ENCODE measurements at regions of chr20 and their contacts with region 1.

Region 1: DNA sequence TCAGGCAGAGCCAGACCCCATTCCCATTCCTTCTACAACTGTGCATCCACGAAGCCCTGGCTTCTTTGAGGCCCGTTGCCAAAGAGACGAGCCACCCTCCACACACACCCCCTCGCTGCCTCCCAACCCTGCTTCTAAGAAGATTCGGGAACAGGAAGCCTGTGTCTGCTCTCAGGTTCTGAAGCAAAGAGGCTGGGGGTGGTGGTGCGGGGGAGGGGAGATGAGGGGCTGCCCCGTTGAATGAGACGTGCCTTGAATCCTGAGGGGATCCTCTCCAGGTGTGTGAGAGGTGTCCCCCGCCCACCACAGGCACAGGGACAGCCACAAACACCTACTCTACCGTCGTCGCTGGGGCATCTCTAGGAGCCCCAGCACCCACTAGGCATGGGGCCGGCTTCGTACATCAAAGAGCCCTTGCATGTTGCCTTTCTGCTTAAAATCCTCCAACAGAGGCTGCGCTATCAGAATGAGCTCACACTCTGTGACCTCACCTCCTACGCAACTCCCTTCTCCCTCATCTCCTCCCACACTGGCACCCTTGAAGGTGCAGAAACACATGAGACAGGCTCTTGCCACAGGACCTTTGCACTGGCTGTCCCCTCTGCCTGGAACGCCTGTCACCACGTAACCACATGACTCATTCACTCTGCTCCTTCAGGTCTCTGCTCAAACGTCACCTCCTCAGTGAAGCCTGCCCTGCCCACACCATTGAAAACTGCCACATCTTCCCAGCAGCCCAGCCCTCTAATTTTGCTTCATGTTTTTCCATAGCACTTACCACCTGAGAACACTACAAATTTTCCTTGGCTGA is 58.5 kb downstream of the PREX1 start:
- DNase-seq: peak; percentile 36 to 94 (median 85)
- ATAC-seq: peak; percentile 68 to 86 (median 70)
- H3K4me3 ChIP-seq: peak overlapping the region in 1 of 2 donors; percentile 10
- H3K4me3 Mint-ChIP-seq: peak overlapping the region; percentile 7 to 57 (median 54)
- H3K27ac ChIP-seq: peak overlapping the region; percentile 80
- H3K27ac Mint-ChIP-seq: peak overlapping the region; percentile 93 to 94
- H3K4me1 ChIP-seq: peaks cover 13 to 94% of the 10 kb centered on the region in 2 experiments
- H3K4me1 Mint-ChIP-seq: peaks cover 78 to 97% (median 89%) of the 10 kb centered on the region in 3 donors
- H3K27me3 ChIP-seq: no peaks in the 10 kb centered on the region
- H3K27me3 Mint-ChIP-seq: no peaks in the 10 kb centered on the region

Region 2: GRCh38 chr20:48733296-48733887 is 35.9 kb before region 1 on chr20:
- CTCF ChIA-PET with region 1: no interaction called
- POLR2A ChIA-PET with region 1: no interaction called
- DNase-seq: no peak
- ATAC-seq: no peak
- H3K4me3 ChIP-seq: no peak overlapping the region
- H3K4me3 Mint-ChIP-seq: no peak overlapping the region
- H3K27ac ChIP-seq: no peak overlapping the region
- H3K27ac Mint-ChIP-seq: peak overlapping the region; percentile 11 to 49
- H3K4me1 ChIP-seq: peaks cover 0 to 53% of the 10 kb centered on the region in 2 experiments
- H3K4me1 Mint-ChIP-seq: peaks cover 45 to 67% (median 59%) of the 10 kb centered on the region in 3 donors
- H3K27me3 ChIP-seq: no peaks in the 10 kb centered on the region
- H3K27me3 Mint-ChIP-seq: no peaks in the 10 kb centered on the region

Region 3: DNA sequence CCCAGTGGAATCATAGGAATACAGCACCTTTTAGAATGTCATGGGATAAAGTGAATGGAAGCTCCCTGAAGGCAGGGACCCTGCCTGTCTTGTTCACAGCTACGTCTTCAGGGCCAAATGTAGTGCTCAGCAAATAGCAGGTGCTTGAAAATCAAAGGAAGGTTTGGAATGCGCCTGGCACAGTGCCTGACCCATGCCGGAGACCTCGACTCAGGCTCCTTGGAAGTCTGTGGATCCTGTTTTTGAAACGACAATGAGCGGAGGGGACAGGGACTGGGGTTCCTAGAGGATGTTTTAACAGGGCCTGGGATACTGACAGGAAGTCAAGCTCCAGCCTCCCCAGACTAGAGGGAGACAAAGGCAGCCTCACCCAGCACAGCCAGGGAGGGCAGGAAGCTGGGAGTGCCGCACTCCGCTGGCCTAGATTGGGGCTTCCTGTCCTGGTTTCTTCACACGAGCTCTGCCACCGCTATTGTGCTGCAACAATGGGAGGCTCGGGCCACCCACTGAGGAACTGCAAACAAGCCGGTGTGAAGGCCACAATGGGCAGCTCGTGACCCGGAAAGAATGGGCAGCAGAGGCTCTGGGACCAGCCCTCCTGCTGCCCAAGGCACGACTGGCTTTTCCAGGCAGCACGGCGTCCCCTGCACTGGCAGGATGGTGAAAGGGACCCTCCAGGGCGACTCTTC is 18.2 kb before region 1 on chr20:
- CTCF ChIA-PET with region 1: interaction called in 1 of 2 experiments, 11 read pairs
- POLR2A ChIA-PET with region 1: interaction called, 3 read pairs
- DNase-seq: peak; percentile 25 to 71 (median 43)
- ATAC-seq: peak; percentile 89 to 93 (median 92)
- H3K4me3 ChIP-seq: peak overlapping the region in 1 of 2 donors; percentile 35
- H3K4me3 Mint-ChIP-seq: peak overlapping the region; percentile 64 to 73 (median 66)
- H3K27ac ChIP-seq: peak overlapping the region; percentile 34
- H3K27ac Mint-ChIP-seq: peak overlapping the region; percentile 90 to 97
- H3K4me1 ChIP-seq: peaks cover 15 to 77% of the 10 kb centered on the region in 2 experiments
- H3K4me1 Mint-ChIP-seq: peaks cover 60 to 87% (median 81%) of the 10 kb centered on the region in 3 donors
- H3K27me3 ChIP-seq: no peaks in the 10 kb centered on the region
- H3K27me3 Mint-ChIP-seq: no peaks in the 10 kb centered on the region

Region 4: GRCh38 chr20:49054056-49054643 is 284.9 kb after region 1 on chr20:
- CTCF ChIA-PET with region 1: no interaction called
- POLR2A ChIA-PET with region 1: no interaction called
- DNase-seq: no peak
- ATAC-seq: no peak
- H3K4me3 ChIP-seq: no peak overlapping the region
- H3K4me3 Mint-ChIP-seq: no peak overlapping the region
- H3K27ac ChIP-seq: no peak overlapping the region
- H3K27ac Mint-ChIP-seq: no peak overlapping the region
- H3K4me1 ChIP-seq: peaks cover 2 to 29% of the 10 kb centered on the region in 2 experiments
- H3K4me1 Mint-ChIP-seq: peaks cover 39 to 63% (median 58%) of the 10 kb centered on the region in 3 donors
- H3K27me3 ChIP-seq: no peaks in the 10 kb centered on the region
- H3K27me3 Mint-ChIP-seq: no peaks in the 10 kb centered on the region